PC-9 (cell line): ENCODE measurements at regions of chr3 and their contacts with region 1.

Region 1: GRCh38 chr3:52220380-52221026 is 4.9 kb downstream of the TLR9 start:
- DNase-seq: peak; percentile 67 to 87
- H3K4me3 ChIP-seq: no peak overlapping the region
- H3K27ac ChIP-seq: no peak overlapping the region
- H3K4me1 ChIP-seq: peaks cover 53% of the 10 kb centered on the region
- H3K27me3 ChIP-seq: no peaks in the 10 kb centered on the region
- CTCF ChIP-seq: peak; percentile 85

Region 2: GRCh38 chr3:51995346-51996163 is 224.9 kb before region 1 on chr3 and contains the start of gene RPL29:
- CTCF ChIA-PET with region 1: interaction called, 16 read pairs
- POLR2A ChIA-PET with region 1: no interaction called
- intact Hi-C with region 1: loop called (anchors 1 kb)
- DNase-seq: peak; percentile 80 to 90
- H3K4me3 ChIP-seq: peak within 1 kb of the TSS; percentile 100
- H3K27ac ChIP-seq: peak within 1 kb of the TSS; percentile 95
- H3K4me1 ChIP-seq: peaks cover 20% of the 10 kb centered on the region
- H3K27me3 ChIP-seq: no peaks in the 10 kb centered on the region
- CTCF ChIP-seq: no peak; the same call in 1 of the 2 replicates
- total RNA-seq, gene RPL29: 942 and 1,278 TPM in 2 replicates

Region 3: GRCh38 chr3:52162250-52162872 is 58.1 kb before region 1 on chr3:
- CTCF ChIA-PET with region 1: no interaction called
- POLR2A ChIA-PET with region 1: interaction called, 10 read pairs
- intact Hi-C with region 1: no loop called
- DNase-seq: no peak
- H3K4me3 ChIP-seq: no peak overlapping the region
- H3K27ac ChIP-seq: no peak overlapping the region
- H3K4me1 ChIP-seq: no peaks in the 10 kb centered on the region
- H3K27me3 ChIP-seq: no peaks in the 10 kb centered on the region
- CTCF ChIP-seq: no peak

Region 4: DNA sequence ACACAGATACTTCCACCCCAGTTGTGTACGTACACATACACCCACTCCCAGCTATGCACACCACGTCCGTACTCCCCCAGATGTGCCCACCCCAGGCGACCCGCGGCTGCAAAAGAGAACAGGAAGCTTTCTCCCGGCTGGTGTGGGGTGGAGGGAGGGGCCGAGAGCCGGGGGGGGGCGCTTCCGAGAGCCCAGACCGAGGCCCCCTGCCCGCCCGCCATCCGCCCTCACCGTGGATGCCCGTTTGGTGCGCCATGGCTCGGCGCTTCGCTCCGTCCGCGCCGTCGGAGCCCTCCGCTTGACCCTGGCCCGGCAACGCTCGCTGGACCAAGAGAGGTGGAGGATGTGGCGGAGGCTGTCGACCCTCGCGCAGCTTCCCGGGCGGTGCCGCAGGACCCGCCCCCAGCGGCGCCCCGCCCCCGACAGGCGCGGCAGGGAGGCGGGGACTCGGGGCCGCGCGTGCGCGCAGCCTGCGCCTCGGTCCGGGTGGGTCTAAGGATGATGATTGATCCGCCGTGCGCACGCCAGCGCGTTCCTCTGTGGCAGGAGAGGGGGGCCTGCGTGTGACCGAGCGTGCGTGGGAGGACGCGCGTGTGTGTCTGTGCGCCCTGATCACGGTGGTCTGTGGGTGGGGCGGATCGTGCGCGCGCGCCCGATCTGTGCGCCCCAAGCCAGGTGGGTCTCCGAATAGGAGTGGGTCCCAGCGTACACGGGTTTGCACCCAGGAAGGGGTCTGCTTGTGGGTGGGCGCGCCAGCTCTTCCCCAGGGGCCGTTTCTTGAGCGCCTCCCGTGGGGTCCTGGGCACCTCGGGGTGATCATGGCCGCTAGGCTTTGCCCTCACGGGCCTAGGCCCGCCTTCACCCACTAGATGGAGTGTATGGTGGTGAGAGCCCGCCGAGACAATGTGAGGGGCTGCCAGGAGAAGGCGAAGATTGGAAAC is 18.5 kb after region 1 on chr3 and contains the start of gene TWF2:
- CTCF ChIA-PET with region 1: interaction called, 19 read pairs
- POLR2A ChIA-PET with region 1: interaction called, 3 read pairs
- intact Hi-C with region 1: loop called (anchors 1 kb)
- DNase-seq: peak in 1 of 2 experiments; percentile 84
- H3K4me3 ChIP-seq: peak within 1 kb of the TSS; percentile 93
- H3K27ac ChIP-seq: peak within 1 kb of the TSS; percentile 89
- H3K4me1 ChIP-seq: peaks cover 57% of the 10 kb centered on the region
- H3K27me3 ChIP-seq: no peaks in the 10 kb centered on the region
- CTCF ChIP-seq: no peak
- total RNA-seq, gene TWF2: 102 and 115 TPM in 2 replicates

Region 5: DNA sequence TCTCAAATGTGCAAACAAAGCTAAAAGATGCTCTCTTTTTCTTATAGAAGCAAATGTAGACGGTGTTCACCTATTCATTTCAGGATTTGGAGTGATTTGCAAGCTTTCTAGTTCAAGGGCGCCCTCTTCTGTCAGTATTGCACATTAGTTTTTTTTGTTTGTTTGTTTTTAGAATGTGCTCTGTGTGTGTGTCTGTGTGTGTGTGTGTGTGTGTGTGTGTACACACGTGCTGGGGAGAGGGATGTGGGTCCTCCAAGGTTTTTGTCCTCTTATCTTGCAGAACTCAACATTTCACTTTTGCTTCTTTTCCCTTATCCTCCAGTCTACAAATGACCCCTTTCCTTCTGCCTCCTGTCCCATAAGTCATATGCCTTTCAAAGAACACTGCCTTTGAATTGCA is 119.1 kb after region 1 on chr3:
- CTCF ChIA-PET with region 1: interaction called, 6 read pairs
- POLR2A ChIA-PET with region 1: no interaction called
- intact Hi-C with region 1: loop called (anchors 1 kb)
- DNase-seq: peak; percentile 22 to 68
- H3K4me3 ChIP-seq: no peak overlapping the region
- H3K27ac ChIP-seq: no peak overlapping the region
- H3K4me1 ChIP-seq: no peaks in the 10 kb centered on the region
- H3K27me3 ChIP-seq: no peaks in the 10 kb centered on the region
- CTCF ChIP-seq: peak; percentile 78